ENCODE measurements at regions of chr19 and their contacts with region 1.

Region 1: GRCh38 chr19:13262450-13262849 is 112.2 kb downstream of the IER2 start:
- DNase-seq: peak; percentile 88
- ATAC-seq: peak; percentile 59
- H3K4me3 ChIP-seq: no peak overlapping the region
- H3K27ac ChIP-seq: no peak overlapping the region
- H3K4me1 ChIP-seq: peaks cover 20% of the 10 kb centered on the region
- H3K27me3 ChIP-seq: no peaks in the 10 kb centered on the region
- CTCF ChIP-seq: peak; percentile 82

Region 2: GRCh38 chr19:12722566-12723380 is 539.7 kb before region 1 on chr19:
- CTCF ChIA-PET with region 1: no interaction called
- POLR2A ChIA-PET with region 1: no interaction called
- intact Hi-C with region 1: no loop called
- DNase-seq: peak; percentile 99
- ATAC-seq: peak; percentile 62
- H3K4me3 ChIP-seq: peak overlapping the region; percentile 89
- H3K27ac ChIP-seq: peak overlapping the region; percentile 68
- H3K4me1 ChIP-seq: peaks cover 37% of the 10 kb centered on the region
- H3K27me3 ChIP-seq: no peaks in the 10 kb centered on the region
- CTCF ChIP-seq: no peak

Region 3: GRCh38 chr19:12974301-12975220 is 287.9 kb before region 1 on chr19:
- CTCF ChIA-PET with region 1: interaction called, 10 read pairs
- POLR2A ChIA-PET with region 1: interaction called, 5 read pairs
- intact Hi-C with region 1: loop called (anchors 1 kb)
- DNase-seq: no peak
- ATAC-seq: no peak
- H3K4me3 ChIP-seq: no peak overlapping the region
- H3K27ac ChIP-seq: no peak overlapping the region
- H3K4me1 ChIP-seq: no peaks in the 10 kb centered on the region
- H3K27me3 ChIP-seq: no peaks in the 10 kb centered on the region
- CTCF ChIP-seq: no peak

Region 4: DNA sequence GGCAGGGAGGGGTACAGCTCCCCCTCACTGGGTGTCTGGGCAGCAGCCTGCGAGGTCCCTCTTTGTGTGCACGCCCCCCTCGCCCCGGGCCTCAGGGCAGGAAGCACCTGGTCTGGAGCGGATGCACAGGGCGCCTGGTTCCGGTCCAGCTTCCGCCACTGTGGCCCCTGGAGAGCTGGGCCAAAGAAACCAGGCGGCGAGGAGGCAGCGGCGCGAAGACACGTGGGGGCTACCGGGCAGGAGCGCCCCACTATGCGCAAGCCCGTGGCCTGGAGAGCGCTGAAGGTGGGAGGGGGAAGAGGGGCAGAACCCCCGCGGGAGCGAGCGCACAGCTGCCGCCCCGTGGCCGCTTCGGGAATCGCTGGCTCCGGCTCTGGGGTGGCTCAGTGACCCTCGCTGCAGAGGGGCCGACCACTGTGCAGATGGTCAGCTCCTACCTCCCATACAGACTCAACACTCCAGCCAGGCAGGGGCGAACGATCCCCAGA is 158.0 kb before region 1 on chr19:
- CTCF ChIA-PET with region 1: interaction called, 16 read pairs
- POLR2A ChIA-PET with region 1: no interaction called
- intact Hi-C with region 1: no loop called
- DNase-seq: peak; percentile 50
- ATAC-seq: peak; percentile 17
- H3K4me3 ChIP-seq: peak overlapping the region; percentile 57
- H3K27ac ChIP-seq: no peak overlapping the region
- H3K4me1 ChIP-seq: peaks cover 10% of the 10 kb centered on the region; the same call in 1 of the 2 replicates
- H3K27me3 ChIP-seq: no peaks in the 10 kb centered on the region
- CTCF ChIP-seq: peak; percentile 94

Region 5: DNA sequence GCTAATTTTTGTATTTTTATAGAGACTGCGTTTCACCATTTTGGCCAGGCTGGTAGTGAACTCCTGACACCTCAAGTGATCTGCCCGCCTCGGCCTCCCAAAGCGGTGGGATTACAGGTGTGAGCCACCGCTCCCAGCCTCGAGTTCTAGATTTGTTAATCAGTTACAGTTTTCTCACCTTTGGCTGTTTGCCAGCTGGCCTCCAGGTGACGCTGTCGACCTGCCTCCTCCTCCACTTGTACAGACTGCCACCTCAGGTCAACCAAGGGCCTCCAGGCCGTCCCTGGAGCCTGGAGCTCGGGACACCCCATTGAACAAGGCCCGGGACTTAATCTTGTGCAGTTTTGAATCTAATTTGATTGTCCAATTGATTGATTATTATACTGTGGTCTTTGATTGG is 66.8 kb before region 1 on chr19:
- CTCF ChIA-PET with region 1: no interaction called
- POLR2A ChIA-PET with region 1: interaction called, 5 read pairs
- intact Hi-C with region 1: loop called (anchors 1 kb)
- DNase-seq: no peak
- ATAC-seq: no peak
- H3K4me3 ChIP-seq: no peak overlapping the region
- H3K27ac ChIP-seq: no peak overlapping the region
- H3K4me1 ChIP-seq: no peaks in the 10 kb centered on the region
- H3K27me3 ChIP-seq: no peaks in the 10 kb centered on the region
- CTCF ChIP-seq: no peak; the same call in 1 of the 2 replicates

Region 6: GRCh38 chr19:13228561-13228960 is 33.9 kb before region 1 on chr19:
- CTCF ChIA-PET with region 1: no interaction called
- POLR2A ChIA-PET with region 1: no interaction called
- intact Hi-C with region 1: loop called (anchors 2 kb)
- DNase-seq: peak; percentile 61
- ATAC-seq: peak; percentile 55
- H3K4me3 ChIP-seq: no peak overlapping the region
- H3K27ac ChIP-seq: no peak overlapping the region
- H3K4me1 ChIP-seq: peaks cover 6% of the 10 kb centered on the region; the same call in 1 of the 2 replicates
- H3K27me3 ChIP-seq: peaks cover 7% of the 10 kb centered on the region; the same call in 1 of the 2 replicates
- CTCF ChIP-seq: peak; percentile 43; the same call in 1 of the 2 replicates

Region 7: DNA sequence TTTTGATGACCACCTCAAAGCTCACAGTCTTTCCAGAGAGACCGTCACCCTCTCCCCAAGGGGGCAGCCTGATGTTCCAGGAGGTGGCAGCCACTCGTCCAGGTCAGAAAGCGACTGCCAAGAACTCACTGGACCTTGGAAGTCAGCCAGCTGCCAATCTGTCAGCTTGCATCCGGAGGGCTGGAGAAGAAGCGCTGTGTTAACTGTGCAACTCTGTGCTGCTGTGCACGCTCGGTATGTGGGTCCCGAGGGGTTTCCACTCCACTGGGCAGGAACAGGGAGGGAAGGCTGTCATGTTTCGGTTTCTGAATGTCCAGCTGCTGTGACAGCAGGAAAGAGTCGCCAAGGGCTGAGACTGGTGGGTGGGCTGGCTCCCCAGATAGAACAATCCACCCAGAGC is 154.6 kb after region 1 on chr19:
- CTCF ChIA-PET with region 1: no interaction called
- POLR2A ChIA-PET with region 1: no interaction called
- intact Hi-C with region 1: no loop called
- DNase-seq: peak; percentile 23
- ATAC-seq: peak; percentile 27; the same call in 1 of the 2 replicates
- H3K4me3 ChIP-seq: no peak overlapping the region
- H3K27ac ChIP-seq: no peak overlapping the region
- H3K4me1 ChIP-seq: no peaks in the 10 kb centered on the region
- H3K27me3 ChIP-seq: 0 out of 2 replicates have a peak, but pooled peaks cover 3% of the 10 kb centered on the region
- CTCF ChIP-seq: no peak